Mammary epithelial cell (primary cell): ENCODE measurements at regions of chr1 and their contacts with region 1.

Region 1: DNA sequence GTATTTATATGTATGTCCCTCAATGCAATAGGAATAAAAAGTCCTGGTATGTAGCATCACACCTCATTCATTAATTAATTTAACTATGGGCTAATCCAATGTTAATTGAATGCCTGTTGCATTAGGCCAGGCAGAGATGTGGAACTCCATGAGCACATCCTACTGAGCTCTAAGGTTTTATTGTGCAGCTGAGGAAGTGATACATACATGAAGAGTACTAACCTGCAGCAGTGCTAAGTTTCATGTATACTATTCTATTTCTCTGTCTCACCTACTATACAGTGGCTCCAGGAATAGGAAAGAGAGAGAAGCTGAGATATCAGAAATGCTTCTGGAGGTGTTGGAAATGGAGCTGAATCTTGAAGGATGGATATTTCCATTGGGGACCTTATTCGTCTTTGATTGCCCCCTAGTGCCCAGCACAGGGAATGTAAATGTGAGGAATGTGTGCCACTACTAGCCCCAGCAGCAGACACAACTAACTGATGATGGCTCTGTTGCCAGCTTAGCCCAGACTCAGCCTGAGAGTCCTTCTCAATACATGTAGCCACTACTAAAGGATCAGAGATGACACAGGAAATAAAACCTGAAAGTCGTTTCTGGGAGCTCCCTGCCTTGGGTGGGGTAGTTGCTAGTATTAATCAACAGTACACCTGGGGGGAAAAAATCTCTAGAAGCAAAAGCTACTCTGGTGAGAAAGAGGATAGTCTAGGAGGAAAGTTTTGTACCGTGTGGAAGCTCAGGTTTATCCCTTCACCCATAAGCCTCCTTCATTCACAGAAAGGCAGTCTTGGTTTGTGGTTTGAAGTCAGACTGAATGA is 173.3 kb upstream of the FOXD3 start:
- DNase-seq: peak; percentile 40
- H3K4me3 ChIP-seq: no peak overlapping the region
- H3K27ac ChIP-seq: no peak overlapping the region
- H3K4me1 ChIP-seq: no peaks in the 10 kb centered on the region
- H3K27me3 ChIP-seq: no peaks in the 10 kb centered on the region
- CTCF ChIP-seq: peak; percentile 74 to 75

Region 2: DNA sequence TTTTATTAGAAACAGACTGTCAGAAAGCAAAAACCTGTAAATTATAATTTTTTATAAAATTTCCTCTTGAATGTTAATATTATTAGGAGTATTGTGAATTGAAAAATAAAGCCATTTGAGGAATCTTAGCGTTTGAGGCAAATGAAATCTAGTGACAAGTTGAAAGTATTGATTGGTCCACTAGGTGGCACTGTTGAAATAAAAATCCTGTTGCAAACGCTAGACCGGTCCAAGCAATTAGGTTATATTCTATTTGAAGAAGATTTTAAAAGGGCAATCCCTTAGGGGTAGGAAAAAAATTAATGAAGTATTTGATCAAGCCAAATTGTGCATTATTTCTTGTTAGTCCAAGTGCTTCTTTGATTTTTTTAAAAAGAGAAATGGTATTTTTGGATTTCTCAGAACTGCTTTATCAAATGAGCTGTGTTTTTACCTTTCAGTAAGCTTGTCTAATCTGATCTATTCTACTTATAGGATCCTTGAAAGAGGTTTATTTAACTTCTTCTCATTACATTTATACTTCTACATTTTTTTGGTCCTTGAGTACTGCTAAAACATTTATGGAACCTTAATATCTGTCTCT is 307.4 kb before region 1 on chr1:
- CTCF ChIA-PET with region 1: no interaction called
- dilution Hi-C with region 1: no loop called
- in situ Hi-C with region 1: no loop called
- intact Hi-C with region 1: loop called (anchors 1 kb)
- DNase-seq: peak; percentile 35
- H3K4me3 ChIP-seq: no peak overlapping the region
- H3K27ac ChIP-seq: no peak overlapping the region
- H3K4me1 ChIP-seq: no peaks in the 10 kb centered on the region
- H3K27me3 ChIP-seq: no peaks in the 10 kb centered on the region
- CTCF ChIP-seq: peak; percentile 56 to 58

Region 3: DNA sequence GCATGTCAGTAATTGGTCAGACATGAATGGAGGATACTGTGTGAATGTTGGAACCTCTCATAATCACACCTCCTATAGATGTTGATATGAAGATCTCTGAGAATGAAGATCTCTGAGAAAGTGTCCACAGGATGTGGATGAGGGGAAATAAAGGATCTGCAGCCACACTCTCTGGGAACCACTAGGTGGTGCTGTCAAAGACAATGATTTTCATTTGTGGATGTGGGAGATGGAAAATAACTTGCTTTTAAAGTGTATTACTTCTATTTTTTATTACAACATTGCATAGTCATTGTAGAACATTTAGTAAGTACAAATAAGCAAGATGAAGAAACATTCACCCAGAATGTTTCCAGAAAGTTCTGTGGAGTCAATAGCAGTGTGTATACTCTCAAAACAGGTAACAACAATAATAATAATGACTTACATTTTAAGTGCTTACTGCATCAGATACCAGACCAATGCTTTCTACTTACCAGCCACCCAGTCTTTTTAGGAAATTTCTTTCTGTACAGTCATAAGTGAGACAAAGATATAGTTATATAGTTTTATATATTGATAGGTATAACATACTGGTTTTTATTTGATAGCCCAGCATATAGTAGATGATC is 236.9 kb before region 1 on chr1:
- CTCF ChIA-PET with region 1: no interaction called
- dilution Hi-C with region 1: no loop called
- in situ Hi-C with region 1: no loop called
- intact Hi-C with region 1: loop called (anchors 1 kb)
- DNase-seq: peak; percentile 9
- H3K4me3 ChIP-seq: no peak overlapping the region
- H3K27ac ChIP-seq: no peak overlapping the region
- H3K4me1 ChIP-seq: no peaks in the 10 kb centered on the region
- H3K27me3 ChIP-seq: no peaks in the 10 kb centered on the region
- CTCF ChIP-seq: peak; percentile 80 to 92

Region 4: GRCh38 chr1:62962901-62963776 is 185.9 kb before region 1 on chr1:
- CTCF ChIA-PET with region 1: no interaction called
- dilution Hi-C with region 1: no loop called
- in situ Hi-C with region 1: no loop called
- intact Hi-C with region 1: loop called (anchors 1 kb)
- DNase-seq: peak; percentile 8
- H3K4me3 ChIP-seq: no peak overlapping the region
- H3K27ac ChIP-seq: no peak overlapping the region
- H3K4me1 ChIP-seq: no peaks in the 10 kb centered on the region
- H3K27me3 ChIP-seq: no peaks in the 10 kb centered on the region
- CTCF ChIP-seq: peak; percentile 35 to 61

Region 5: GRCh38 chr1:63004868-63005267 is 144.2 kb before region 1 on chr1:
- CTCF ChIA-PET with region 1: interaction called, 6 read pairs
- dilution Hi-C with region 1: no loop called
- in situ Hi-C with region 1: no loop called
- intact Hi-C with region 1: loop called (anchors 1 kb)
- DNase-seq: no peak
- H3K4me3 ChIP-seq: no peak overlapping the region
- H3K27ac ChIP-seq: no peak overlapping the region
- H3K4me1 ChIP-seq: no peaks in the 10 kb centered on the region
- H3K27me3 ChIP-seq: no peaks in the 10 kb centered on the region
- CTCF ChIP-seq: peak; percentile 18 to 38

Region 6: GRCh38 chr1:63864224-63864641 is 715.2 kb after region 1 on chr1:
- CTCF ChIA-PET with region 1: no interaction called
- dilution Hi-C with region 1: no loop called
- in situ Hi-C with region 1: no loop called
- intact Hi-C with region 1: no loop called
- DNase-seq: peak; percentile 97
- H3K4me3 ChIP-seq: no peak overlapping the region
- H3K27ac ChIP-seq: peak overlapping the region; percentile 58
- H3K4me1 ChIP-seq: peaks cover 62% of the 10 kb centered on the region
- H3K27me3 ChIP-seq: no peaks in the 10 kb centered on the region
- CTCF ChIP-seq: no peak